Heart left ventricle (tissue), 16 donors: ENCODE measurements at regions of chr5 and their contacts with region 1.

Region 1: GRCh38 chr5:138449501-138450239 is 10.8 kb downstream of the REEP2 start:
- DNase-seq: peak; percentile 87 to 92 (median 89)
- ATAC-seq: peak; percentile 83 to 94 (median 92)
- H3K4me3 ChIP-seq: peak overlapping the region in 1 of 12 donors; percentile 16
- H3K27ac ChIP-seq: no peak overlapping the region
- H3K4me1 ChIP-seq: peaks cover 0 to 10% (median 7%) of the 10 kb centered on the region in 12 donors
- H3K27me3 ChIP-seq: no peaks in the 10 kb centered on the region
- CTCF ChIP-seq: peak; percentile 93 to 97 (median 96)
- POLR2A ChIP-seq: no peak

Region 2: DNA sequence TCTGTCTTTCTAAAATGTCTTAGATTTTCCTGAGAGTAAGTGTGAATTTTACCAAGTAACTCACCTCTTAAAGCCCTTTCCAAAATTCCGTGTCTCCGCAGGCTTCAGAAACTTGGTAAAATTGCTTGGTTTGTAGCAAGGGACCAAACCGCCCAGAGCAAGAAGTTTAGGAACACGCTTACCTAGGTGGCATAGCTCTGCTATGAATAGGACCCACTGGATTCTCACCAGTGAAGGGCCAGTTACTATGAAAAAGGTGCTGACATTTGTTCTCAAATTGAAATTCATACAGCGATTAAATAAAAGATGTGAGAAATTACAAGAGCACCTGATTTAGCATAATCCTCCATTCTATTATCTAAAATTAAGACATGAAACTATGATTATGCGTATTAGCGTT is 317.1 kb before region 1 on chr5:
- intact Hi-C with region 1: no loop called
- DNase-seq: no peak
- ATAC-seq: no peak
- H3K4me3 ChIP-seq: peak overlapping the region in 2 of 12 donors; percentile 27 to 48
- H3K27ac ChIP-seq: no peak overlapping the region
- H3K4me1 ChIP-seq: no peaks in the 10 kb centered on the region
- H3K27me3 ChIP-seq: no peaks in the 10 kb centered on the region
- CTCF ChIP-seq: no peak
- POLR2A ChIP-seq: no peak

Region 3: GRCh38 chr5:138503487-138504270 is 54.0 kb after region 1 on chr5:
- intact Hi-C with region 1: loop called (anchors 1 to 5 kb)
- DNase-seq: peak in 2 of 5 donors; percentile 18 to 40
- ATAC-seq: peak; percentile 72 to 79 (median 76)
- H3K4me3 ChIP-seq: no peak overlapping the region
- H3K27ac ChIP-seq: peak overlapping the region in 4 of 12 donors; percentile 4 to 49 (median 28)
- H3K4me1 ChIP-seq: peaks cover 0 to 28% (median 8%) of the 10 kb centered on the region in 12 donors
- H3K27me3 ChIP-seq: no peaks in the 10 kb centered on the region
- CTCF ChIP-seq: peak; percentile 61 to 79 (median 72)
- POLR2A ChIP-seq: no peak